Stomach (tissue), 19 donors: ENCODE measurements at regions of chr1 and their contacts with region 1.

Region 1: GRCh38 chr1:234599617-234600417 is 10.2 kb downstream of the IRF2BP2 start:
- DNase-seq: peak; percentile 89 to 96
- H3K4me3 ChIP-seq: peak overlapping the region; percentile 39 to 51 (median 44)
- H3K27ac ChIP-seq: peak overlapping the region; percentile 99 to 100 (median 100)
- H3K4me1 ChIP-seq: peaks cover 36 to 60% (median 51%) of the 10 kb centered on the region in 4 donors
- H3K27me3 ChIP-seq: no peaks in the 10 kb centered on the region
- CTCF ChIP-seq: peak in 1 of 7 experiments; percentile 11
- EP300 ChIP-seq: peak; percentile 86
- POLR2A ChIP-seq: peak in 1 of 4 donors; percentile 37

Region 2: GRCh38 chr1:234499119-234499942 is 100.5 kb before region 1 on chr1:
- intact Hi-C with region 1: loop called (anchors 10 kb)
- DNase-seq: peak; percentile 94 to 96
- H3K4me3 ChIP-seq: peak overlapping the region in 3 of 4 donors; percentile 9 to 14 (median 12)
- H3K27ac ChIP-seq: peak overlapping the region; percentile 43 to 87 (median 86)
- H3K4me1 ChIP-seq: peaks cover 14 to 45% (median 23%) of the 10 kb centered on the region in 4 donors
- H3K27me3 ChIP-seq: no peaks in the 10 kb centered on the region
- CTCF ChIP-seq: peak in 5 of 7 experiments; percentile 88 to 94 (median 92)
- EP300 ChIP-seq: peak; percentile 53
- POLR2A ChIP-seq: no peak

Region 3: DNA sequence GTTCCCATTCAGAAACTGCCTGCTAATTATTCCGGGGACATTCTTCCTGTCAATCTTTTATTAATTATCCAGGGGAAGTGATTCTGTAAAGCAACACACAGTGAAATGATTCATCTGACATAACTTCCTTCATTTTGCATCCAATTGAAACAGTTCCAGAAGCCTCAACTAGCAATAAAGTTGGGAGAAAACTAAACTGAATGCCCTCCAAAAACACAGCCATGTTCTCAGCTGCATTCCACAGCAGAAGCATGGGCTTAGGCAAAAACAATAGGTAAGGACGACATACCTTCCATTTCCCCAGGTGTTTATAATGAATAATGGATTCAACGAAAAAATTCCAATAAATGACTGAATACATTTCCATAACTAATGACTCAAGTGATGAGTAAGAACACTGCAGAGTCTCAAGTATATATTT is 84.0 kb before region 1 on chr1:
- intact Hi-C with region 1: no loop called
- DNase-seq: no peak
- H3K4me3 ChIP-seq: no peak overlapping the region
- H3K27ac ChIP-seq: peak overlapping the region in 1 of 5 donors; percentile 23
- H3K4me1 ChIP-seq: peaks cover 0 to 36% (median 7%) of the 10 kb centered on the region in 4 donors
- H3K27me3 ChIP-seq: no peaks in the 10 kb centered on the region
- CTCF ChIP-seq: no peak
- EP300 ChIP-seq: no peak
- POLR2A ChIP-seq: no peak

Region 4: DNA sequence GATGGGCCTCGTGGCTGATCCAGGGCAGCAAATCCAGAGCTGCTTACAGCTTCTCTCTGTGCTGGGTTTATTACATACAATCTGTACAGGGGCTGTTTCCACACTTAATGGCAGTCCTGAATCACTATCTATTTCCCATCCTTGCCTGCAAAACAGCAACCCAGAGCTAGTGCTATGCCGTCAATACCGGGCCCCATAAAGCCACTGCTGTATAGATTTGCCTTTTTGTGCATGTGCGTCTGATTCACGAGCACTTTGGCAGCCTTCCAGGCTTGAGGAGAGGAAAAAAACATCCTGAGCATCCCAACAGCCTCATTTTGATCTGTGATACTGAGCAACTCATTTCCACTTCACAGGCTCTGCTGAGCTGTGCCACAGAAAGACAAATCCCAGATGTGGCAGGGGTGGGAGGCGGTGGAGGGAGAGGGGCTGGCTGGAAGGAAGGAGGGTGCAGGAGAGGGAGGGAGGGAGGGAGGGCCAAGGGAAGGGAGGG is 55.7 kb before region 1 on chr1:
- intact Hi-C with region 1: loop called (anchors 10 kb)
- DNase-seq: peak; percentile 58 to 97
- H3K4me3 ChIP-seq: no peak overlapping the region
- H3K27ac ChIP-seq: peak overlapping the region; percentile 76 to 97 (median 80)
- H3K4me1 ChIP-seq: peaks cover 21 to 72% (median 40%) of the 10 kb centered on the region in 4 donors
- H3K27me3 ChIP-seq: no peaks in the 10 kb centered on the region
- CTCF ChIP-seq: no peak
- EP300 ChIP-seq: peak; percentile 9
- POLR2A ChIP-seq: no peak

Region 5: DNA sequence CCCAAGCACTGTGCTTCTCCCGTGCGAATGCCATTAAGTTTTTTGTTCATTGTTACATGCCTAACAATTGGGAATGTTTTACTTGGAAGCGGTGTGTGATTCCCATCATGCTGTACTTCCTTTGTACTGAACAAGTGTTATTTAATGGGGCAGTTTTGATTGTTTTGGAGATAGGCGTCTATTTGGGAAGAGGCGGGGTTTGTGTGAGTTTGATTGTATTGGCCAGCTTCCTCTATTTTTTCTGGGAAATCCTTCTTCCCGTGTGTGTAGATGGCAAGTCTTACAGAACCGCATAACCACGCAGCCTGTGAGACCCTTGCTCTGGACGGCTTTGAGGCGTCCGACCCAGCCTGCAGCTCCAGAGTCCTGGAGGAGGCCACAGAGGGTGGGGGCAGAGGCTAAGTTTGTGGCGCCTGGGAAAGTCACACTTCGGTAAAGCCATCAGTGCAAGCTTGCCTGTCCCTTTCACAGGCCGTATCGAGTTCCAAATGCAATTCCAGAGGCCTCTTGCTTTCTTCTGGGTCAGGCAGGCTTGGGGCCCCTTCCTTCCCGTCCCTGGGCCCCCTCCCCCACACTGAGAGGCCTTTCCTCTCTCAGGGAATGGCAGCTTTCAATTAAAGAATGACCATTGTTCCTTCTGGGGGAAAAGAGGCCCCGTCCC is 318.5 kb after region 1 on chr1:
- intact Hi-C with region 1: no loop called
- DNase-seq: peak; percentile 66 to 69
- H3K4me3 ChIP-seq: no peak overlapping the region
- H3K27ac ChIP-seq: peak overlapping the region; percentile 82 to 90 (median 88)
- H3K4me1 ChIP-seq: peaks cover 61 to 79% (median 70%) of the 10 kb centered on the region in 4 donors
- H3K27me3 ChIP-seq: no peaks in the 10 kb centered on the region
- CTCF ChIP-seq: no peak
- EP300 ChIP-seq: no peak
- POLR2A ChIP-seq: no peak

Region 6: GRCh38 chr1:235011599-235012435 is 412.0 kb after region 1 on chr1:
- intact Hi-C with region 1: no loop called
- DNase-seq: peak; percentile 64 to 88
- H3K4me3 ChIP-seq: no peak overlapping the region
- H3K27ac ChIP-seq: peak overlapping the region in 4 of 5 donors; percentile 39 to 77 (median 46)
- H3K4me1 ChIP-seq: peaks cover 0 to 14% (median 3%) of the 10 kb centered on the region in 4 donors
- H3K27me3 ChIP-seq: no peaks in the 10 kb centered on the region
- CTCF ChIP-seq: no peak
- EP300 ChIP-seq: no peak
- POLR2A ChIP-seq: no peak